ENCODE measurements at regions of chr9 and their contacts with region 1.

Region 1: DNA sequence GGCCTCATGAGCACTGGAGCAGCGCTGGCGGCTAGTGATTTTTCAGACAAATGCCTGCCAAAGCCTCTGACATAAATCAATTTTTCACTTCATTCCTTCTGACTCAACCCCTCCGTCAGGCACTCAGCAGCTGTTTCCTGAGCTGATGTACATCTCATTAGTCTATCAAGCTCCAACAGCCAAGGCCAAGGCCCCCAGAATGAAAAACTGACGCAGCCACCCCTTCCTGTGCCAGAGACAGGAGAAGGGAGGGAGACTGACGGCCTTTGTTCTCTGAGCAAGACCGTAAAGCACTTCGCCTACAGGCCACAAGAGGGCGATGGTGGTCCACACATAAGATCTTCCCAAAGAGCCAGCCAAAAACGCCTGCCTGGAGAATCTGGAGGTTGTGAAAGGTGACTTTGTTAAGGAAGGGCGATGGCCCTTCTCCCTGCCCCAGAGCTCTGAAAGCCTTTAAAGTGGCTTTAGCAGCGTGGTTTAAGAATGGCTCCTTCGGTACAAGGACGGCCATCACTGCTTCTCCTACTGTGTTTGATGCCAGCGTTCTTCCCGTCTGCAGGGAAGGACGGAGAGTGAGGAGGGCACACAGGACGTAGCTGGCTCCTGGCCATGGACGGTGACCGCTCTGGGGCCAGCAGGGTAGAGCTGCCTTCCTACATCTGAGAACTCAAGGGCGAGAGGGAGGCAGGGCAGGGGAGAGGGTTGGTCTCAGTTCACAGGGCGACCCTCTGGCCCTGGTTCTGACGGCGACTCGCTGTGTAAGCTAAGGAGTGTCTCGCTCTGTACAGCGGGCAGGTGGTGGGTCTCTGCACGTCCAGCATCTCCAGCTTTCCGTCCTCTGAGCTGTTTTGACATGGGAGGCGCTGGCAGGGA is 37.0 kb downstream of the ALG2 start:
- DNase-seq: peak; percentile 57
- H3K4me3 Mint-ChIP-seq: no peak overlapping the region
- H3K27ac Mint-ChIP-seq: no peak overlapping the region
- H3K4me1 Mint-ChIP-seq: peaks cover 60% of the 10 kb centered on the region
- H3K27me3 Mint-ChIP-seq: peaks cover 5% of the 10 kb centered on the region

Region 2: GRCh38 chr9:99221621-99222415 is 37.1 kb after region 1 on chr9 and contains the starts of genes ALG2 and SEC61B:
- intact Hi-C with region 1: loop called (anchors 1 kb)
- DNase-seq: peak; percentile 89
- H3K4me3 Mint-ChIP-seq: peak within 1 kb of the TSS; percentile 99
- H3K27ac Mint-ChIP-seq: peak within 1 kb of the TSS; percentile 98
- H3K4me1 Mint-ChIP-seq: peaks cover 67% of the 10 kb centered on the region
- H3K27me3 Mint-ChIP-seq: no peaks in the 10 kb centered on the region
- total RNA-seq, gene ALG2: 37.6 and 39.7 TPM in 2 replicates
- total RNA-seq, gene SEC61B: 180 and 184 TPM in 2 replicates

Region 3: GRCh38 chr9:99253772-99254431 is 69.2 kb after region 1 on chr9:
- intact Hi-C with region 1: loop called (anchors 1 kb)
- DNase-seq: peak; percentile 82
- H3K4me3 Mint-ChIP-seq: peak overlapping the region; percentile 55
- H3K27ac Mint-ChIP-seq: peak overlapping the region; percentile 92
- H3K4me1 Mint-ChIP-seq: peaks cover 62% of the 10 kb centered on the region
- H3K27me3 Mint-ChIP-seq: no peaks in the 10 kb centered on the region

Region 4: DNA sequence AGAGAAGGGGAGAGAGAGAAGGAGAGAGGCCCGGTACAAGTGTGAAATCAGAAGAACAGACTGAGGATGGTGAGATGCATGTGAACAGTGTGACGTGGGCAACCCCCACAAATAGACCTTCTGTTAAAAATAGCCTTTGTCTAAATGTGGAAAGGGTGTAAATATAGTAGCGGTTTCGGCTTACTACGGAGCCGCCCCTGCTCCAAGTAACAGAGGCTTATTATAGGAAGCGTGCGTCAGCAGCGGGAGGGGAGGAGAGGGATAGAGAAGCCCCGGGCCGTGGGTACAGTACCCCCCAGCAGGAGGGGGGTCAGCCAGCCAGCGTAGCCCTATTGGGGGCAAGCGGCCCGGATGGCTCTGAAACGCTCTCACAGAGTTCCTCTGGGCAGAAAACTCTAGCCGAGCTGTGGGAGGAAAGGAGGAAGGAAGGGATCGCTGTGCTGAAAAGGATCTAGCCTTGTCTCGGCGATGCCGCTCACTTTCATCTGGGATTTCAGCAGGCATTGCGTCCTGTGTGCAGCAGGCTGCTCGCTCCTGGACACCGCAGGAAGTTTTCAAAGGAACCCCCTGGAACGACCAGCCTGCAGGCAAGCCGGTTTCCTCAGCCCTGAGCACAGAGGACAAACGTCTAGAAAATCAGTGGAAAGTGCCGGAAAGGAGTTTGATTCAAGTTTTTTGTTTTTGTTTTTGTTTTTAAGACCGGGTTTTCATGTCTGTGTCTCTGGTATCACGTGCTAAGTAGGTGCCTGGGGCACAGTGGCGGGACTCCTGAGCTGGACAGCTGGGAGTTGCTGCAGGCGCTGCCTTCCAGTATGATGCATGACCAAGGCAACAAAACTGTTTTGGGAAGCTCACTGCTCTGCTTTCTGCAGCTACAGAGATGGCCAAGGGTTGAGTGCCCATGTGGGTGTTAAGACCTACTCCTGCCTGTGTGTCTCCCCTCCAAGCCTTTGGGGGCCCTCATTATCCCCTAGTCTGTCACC is 183.9 kb after region 1 on chr9:
- intact Hi-C with region 1: no loop called
- DNase-seq: no peak
- H3K4me3 Mint-ChIP-seq: peak overlapping the region; percentile 71
- H3K27ac Mint-ChIP-seq: peak overlapping the region; percentile 25
- H3K4me1 Mint-ChIP-seq: peaks cover 35% of the 10 kb centered on the region
- H3K27me3 Mint-ChIP-seq: peaks cover 12% of the 10 kb centered on the region

Region 5: DNA sequence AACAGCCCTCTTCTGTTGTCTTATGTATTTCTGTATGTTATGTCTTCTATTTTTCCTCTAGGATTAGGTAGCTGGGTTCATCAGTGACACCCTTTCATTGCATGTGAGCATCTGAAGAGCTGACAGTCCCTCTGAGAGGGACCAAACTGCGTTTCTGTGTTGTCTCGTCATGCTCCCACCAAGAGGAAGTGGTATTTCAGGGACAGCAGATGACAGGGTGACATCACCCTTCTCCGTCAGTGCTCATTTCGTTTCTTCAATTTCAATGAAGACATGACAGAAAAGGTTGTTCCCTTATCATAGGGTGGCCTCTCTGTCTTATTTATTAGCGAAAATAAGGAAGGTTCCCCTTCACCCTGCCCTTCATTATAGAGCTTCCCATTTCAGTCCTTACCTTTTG is 411.1 kb after region 1 on chr9:
- intact Hi-C with region 1: no loop called
- DNase-seq: no peak
- H3K4me3 Mint-ChIP-seq: no peak overlapping the region
- H3K27ac Mint-ChIP-seq: no peak overlapping the region
- H3K4me1 Mint-ChIP-seq: peaks cover 6% of the 10 kb centered on the region
- H3K27me3 Mint-ChIP-seq: peaks cover 4% of the 10 kb centered on the region

Region 6: GRCh38 chr9:99807276-99807852 is 622.7 kb after region 1 on chr9:
- intact Hi-C with region 1: loop called (anchors 2 kb)
- DNase-seq: peak; percentile 43
- H3K4me3 Mint-ChIP-seq: no peak overlapping the region
- H3K27ac Mint-ChIP-seq: no peak overlapping the region
- H3K4me1 Mint-ChIP-seq: peaks cover 37% of the 10 kb centered on the region
- H3K27me3 Mint-ChIP-seq: peaks cover 26% of the 10 kb centered on the region

Region 7: GRCh38 chr9:100011062-100011681 is 826.5 kb after region 1 on chr9:
- intact Hi-C with region 1: loop called (anchors 1 kb)
- DNase-seq: peak; percentile 23
- H3K4me3 Mint-ChIP-seq: no peak overlapping the region
- H3K27ac Mint-ChIP-seq: no peak overlapping the region
- H3K4me1 Mint-ChIP-seq: no peaks in the 10 kb centered on the region
- H3K27me3 Mint-ChIP-seq: no peaks in the 10 kb centered on the region

Region 8: GRCh38 chr9:100426530-100427428 is 1242.1 kb after region 1 on chr9 and contains the start of gene MSANTD3:
- intact Hi-C with region 1: loop called (anchors 5 kb)
- DNase-seq: peak; percentile 28
- H3K4me3 Mint-ChIP-seq: peak within 1 kb of the TSS; percentile 87
- H3K27ac Mint-ChIP-seq: peak within 1 kb of the TSS; percentile 91
- H3K4me1 Mint-ChIP-seq: peaks cover 21% of the 10 kb centered on the region
- H3K27me3 Mint-ChIP-seq: peaks cover 10% of the 10 kb centered on the region
- total RNA-seq, gene MSANTD3: 11.1 and 11.3 TPM in 2 replicates

Measured in activated T-helper 1 cell treated with anti-CD3 and anti-CD28 coated beads, Interleukin-12 subunit alpha, Interleukin-12 subunit beta, Interleukin-2, Interleukin-4 antibody, amounts not matched to agents 30 ng/mL and 10 ng/mL and 1 ng/mL, durations not matched to agents 14 hours and 24 hours and 36 hours (primary cell).